ENCODE measurements at regions of chr10 and their contacts with region 1.

Region 1: GRCh38 chr10:68208424-68209042 is 23.4 kb downstream of the ATOH7 start:
- DNase-seq: no peak
- H3K4me3 Mint-ChIP-seq: no peak overlapping the region
- H3K27ac Mint-ChIP-seq: no peak overlapping the region
- H3K4me1 Mint-ChIP-seq: no peaks in the 10 kb centered on the region
- H3K27me3 Mint-ChIP-seq: peaks cover 13% of the 10 kb centered on the region

Region 2: GRCh38 chr10:68239596-68240150 is 31.1 kb after region 1 on chr10:
- intact Hi-C with region 1: no loop called
- DNase-seq: no peak
- H3K4me3 Mint-ChIP-seq: no peak overlapping the region
- H3K27ac Mint-ChIP-seq: no peak overlapping the region
- H3K4me1 Mint-ChIP-seq: no peaks in the 10 kb centered on the region
- H3K27me3 Mint-ChIP-seq: peaks cover 5% of the 10 kb centered on the region

Region 3: DNA sequence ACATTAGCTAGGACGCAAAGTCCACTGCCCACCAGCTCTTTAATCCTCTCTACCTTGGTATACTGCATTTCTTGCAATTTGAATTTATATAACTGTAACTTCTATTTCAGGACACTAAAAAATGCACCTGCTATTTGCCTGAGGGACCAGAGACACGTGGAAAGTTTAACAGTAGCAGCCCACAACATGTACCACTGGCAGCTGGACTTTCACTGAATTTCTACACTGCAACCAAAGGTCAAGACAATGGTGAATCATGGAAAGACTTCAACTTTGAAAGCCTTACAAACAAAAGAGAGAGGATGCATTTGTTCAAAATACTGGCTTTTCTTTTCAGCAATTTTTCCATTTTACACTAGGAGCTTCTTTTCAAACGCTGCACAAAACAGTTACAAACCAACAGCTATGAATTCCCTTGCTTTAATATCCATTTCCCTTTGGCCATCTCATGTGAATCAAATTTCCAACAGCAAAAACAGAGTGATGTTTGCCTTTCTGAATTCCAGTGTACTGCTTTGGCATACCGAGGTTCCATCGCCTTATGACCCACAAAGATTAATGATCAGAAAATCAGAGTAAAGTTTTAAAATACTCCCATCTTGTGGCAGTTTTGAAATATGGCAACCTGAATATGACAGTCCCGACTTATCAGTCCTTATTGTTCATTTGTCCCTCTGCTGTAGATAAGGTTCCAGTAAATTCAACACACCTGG is 93.4 kb after region 1 on chr10:
- intact Hi-C with region 1: loop called (anchors 2 kb)
- DNase-seq: no peak
- H3K4me3 Mint-ChIP-seq: no peak overlapping the region
- H3K27ac Mint-ChIP-seq: no peak overlapping the region
- H3K4me1 Mint-ChIP-seq: peaks cover 3% of the 10 kb centered on the region
- H3K27me3 Mint-ChIP-seq: no peaks in the 10 kb centered on the region

Region 4: GRCh38 chr10:68348265-68348741 is 139.8 kb after region 1 on chr10:
- intact Hi-C with region 1: loop called (anchors 5 kb)
- DNase-seq: peak; percentile 25
- H3K4me3 Mint-ChIP-seq: no peak overlapping the region
- H3K27ac Mint-ChIP-seq: peak overlapping the region; percentile 51
- H3K4me1 Mint-ChIP-seq: peaks cover 15% of the 10 kb centered on the region
- H3K27me3 Mint-ChIP-seq: no peaks in the 10 kb centered on the region